WTC11 (cell line): ENCODE measurements at regions of chr2 and their contacts with region 1.

Region 1: DNA sequence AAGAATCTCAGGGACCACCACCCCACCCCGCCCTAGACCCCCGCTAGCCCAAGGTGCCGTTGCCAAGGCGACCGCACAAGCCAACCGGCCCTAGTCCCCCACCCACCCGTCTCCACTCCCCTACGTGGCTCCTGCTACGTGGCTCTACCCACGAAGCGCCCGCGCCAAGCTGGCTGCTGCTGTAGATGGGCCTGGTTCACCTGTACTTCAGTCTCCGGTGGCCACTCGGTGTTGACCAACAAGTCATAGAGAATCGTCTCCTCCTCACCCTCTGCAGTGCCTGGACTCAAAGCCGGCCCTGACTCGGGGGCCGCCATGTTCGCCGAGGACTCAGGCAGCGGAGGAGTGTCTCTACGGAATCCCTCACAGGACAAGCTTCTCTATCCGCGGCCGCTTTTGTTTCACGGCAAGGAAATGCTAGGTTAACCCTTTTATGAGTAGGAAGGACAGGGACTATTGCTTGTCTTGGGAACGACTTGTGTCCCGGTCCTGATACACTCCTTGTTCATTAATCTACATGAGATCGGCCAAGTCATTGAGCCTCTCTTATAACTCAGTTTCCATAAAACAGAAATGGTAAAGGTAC is at the start of gene NBAS:
- DNase-seq: peak; percentile 81
- ATAC-seq: peak; percentile 92
- H3K4me3 Mint-ChIP-seq: peak within 1 kb of the TSS; percentile 99
- H3K27ac Mint-ChIP-seq: peak within 1 kb of the TSS; percentile 81
- H3K4me1 Mint-ChIP-seq: peaks cover 19% of the 10 kb centered on the region
- H3K27me3 Mint-ChIP-seq: peaks cover 6% of the 10 kb centered on the region
- CTCF ChIP-seq: no peak
- total RNA-seq, gene NBAS: 32.3 to 42.6 TPM (median 41.4 TPM) in 3 replicates

Region 2: GRCh38 chr2:15421753-15422152 is 139.3 kb before region 1 on chr2:
- CTCF ChIA-PET with region 1: no interaction called
- POLR2A ChIA-PET with region 1: no interaction called
- DNase-seq: no peak
- ATAC-seq: no peak
- H3K4me3 Mint-ChIP-seq: no peak overlapping the region
- H3K27ac Mint-ChIP-seq: no peak overlapping the region
- H3K4me1 Mint-ChIP-seq: peaks cover 20% of the 10 kb centered on the region
- H3K27me3 Mint-ChIP-seq: no peaks in the 10 kb centered on the region
- CTCF ChIP-seq: no peak

Region 3: GRCh38 chr2:15546297-15547098 is 14.6 kb before region 1 on chr2:
- CTCF ChIA-PET with region 1: interaction called, 12 read pairs
- POLR2A ChIA-PET with region 1: no interaction called
- DNase-seq: peak; percentile 14
- ATAC-seq: peak; percentile 51; the same call in 1 of the 2 replicates
- H3K4me3 Mint-ChIP-seq: no peak overlapping the region
- H3K27ac Mint-ChIP-seq: no peak overlapping the region
- H3K4me1 Mint-ChIP-seq: peaks cover 3% of the 10 kb centered on the region
- H3K27me3 Mint-ChIP-seq: no peaks in the 10 kb centered on the region
- CTCF ChIP-seq: peak; percentile 28; the same call in 1 of the 2 replicates